ENCODE measurements at regions of chr16 and their contacts with region 1.

Region 1: GRCh38 chr16:46918861-46919792 is 35.0 kb downstream of the GPT2 start:
- DNase-seq: no peak

Region 2: DNA sequence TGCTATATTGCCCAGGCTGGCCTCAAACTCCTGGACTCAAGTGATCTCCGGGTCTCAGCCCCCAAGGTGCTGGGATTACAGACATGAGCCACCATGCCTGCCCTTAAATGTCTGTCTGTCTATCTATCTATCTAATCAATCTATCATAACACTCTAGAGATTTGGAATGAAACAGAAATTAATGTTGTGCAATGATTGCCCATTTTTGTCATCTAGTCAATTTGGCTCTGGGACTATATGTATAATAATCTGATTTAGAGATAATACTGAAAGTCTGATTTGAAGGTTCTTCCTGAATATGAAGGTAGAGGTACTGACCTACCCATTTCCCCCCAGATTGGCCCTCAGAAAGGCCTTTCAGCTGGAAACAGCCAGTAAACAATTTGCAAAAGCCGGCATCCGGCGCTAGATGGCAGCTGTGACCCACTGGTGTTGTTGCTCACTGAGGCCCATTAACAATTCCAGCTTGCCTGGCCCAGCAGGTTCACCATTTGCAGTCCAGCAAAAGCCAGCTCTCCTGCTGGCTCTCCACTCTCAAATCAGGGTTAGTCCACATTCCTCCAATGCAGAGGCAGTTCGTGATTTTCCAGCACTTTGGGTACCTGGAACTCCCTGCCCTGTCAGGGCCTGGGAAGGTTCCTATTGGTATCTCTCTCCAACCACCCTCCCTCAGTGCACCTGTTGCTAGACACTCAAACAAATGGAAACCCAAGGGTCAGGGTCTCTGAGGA is 65.2 kb before region 1 on chr16:
- in situ Hi-C with region 1: loop called (anchors 10 kb)
- DNase-seq: peak; percentile 70

Region 3: DNA sequence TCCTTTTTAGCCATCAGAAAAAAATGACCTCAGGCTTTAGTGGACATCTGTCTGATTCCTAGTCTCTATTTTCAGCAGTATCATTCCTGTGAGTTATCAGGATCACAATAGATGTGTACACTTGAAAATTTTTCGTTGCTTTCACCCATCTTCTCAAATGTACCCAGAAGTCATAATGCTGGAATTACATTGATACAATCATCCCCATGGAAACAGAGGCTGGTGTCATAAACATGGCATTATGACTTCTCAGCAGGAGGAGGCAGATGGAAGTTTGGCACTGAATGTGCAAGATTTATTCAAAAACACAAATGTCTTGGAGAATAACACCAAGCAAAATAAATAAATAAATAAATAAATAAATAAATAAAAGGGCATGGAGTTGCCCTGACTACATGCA is 834.5 kb after region 1 on chr16:
- in situ Hi-C with region 1: no loop called
- DNase-seq: no peak

Measured in KBM-7 (cell line).